ENCODE measurements at regions of chr11 and their contacts with region 1.

Region 1: GRCh38 chr11:65225279-65226102 is 36.3 kb upstream of the POLA2 start:
- DNase-seq: peak; percentile 49
- ATAC-seq: peak; percentile 89
- H3K4me3 Mint-ChIP-seq: peak overlapping the region; percentile 83
- H3K27ac Mint-ChIP-seq: peak overlapping the region; percentile 24
- H3K4me1 Mint-ChIP-seq: peaks cover 17% of the 10 kb centered on the region
- H3K27me3 Mint-ChIP-seq: no peaks in the 10 kb centered on the region
- CTCF ChIP-seq: no peak

Region 2: GRCh38 chr11:64916775-64917662 is 308.5 kb before region 1 on chr11 and contains the start of gene ATG2A:
- CTCF ChIA-PET with region 1: no interaction called
- POLR2A ChIA-PET with region 1: no interaction called
- intact Hi-C with region 1: no loop called
- DNase-seq: peak; percentile 97
- ATAC-seq: peak; percentile 98
- H3K4me3 Mint-ChIP-seq: peak within 1 kb of the TSS; percentile 88
- H3K27ac Mint-ChIP-seq: peak within 1 kb of the TSS; percentile 85
- H3K4me1 Mint-ChIP-seq: peaks cover 38% of the 10 kb centered on the region
- H3K27me3 Mint-ChIP-seq: no peaks in the 10 kb centered on the region
- CTCF ChIP-seq: no peak
- total RNA-seq, gene ATG2A: 31.2 and 35.0 TPM in 2 replicates

Region 3: GRCh38 chr11:65169164-65169641 is 56.3 kb before region 1 on chr11:
- CTCF ChIA-PET with region 1: no interaction called
- POLR2A ChIA-PET with region 1: no interaction called
- intact Hi-C with region 1: no loop called
- DNase-seq: no peak
- ATAC-seq: peak; percentile 62
- H3K4me3 Mint-ChIP-seq: no peak overlapping the region
- H3K27ac Mint-ChIP-seq: peak overlapping the region; percentile 87
- H3K4me1 Mint-ChIP-seq: peaks cover 12% of the 10 kb centered on the region
- H3K27me3 Mint-ChIP-seq: no peaks in the 10 kb centered on the region
- CTCF ChIP-seq: no peak

Region 4: GRCh38 chr11:65236194-65237059 is 10.9 kb after region 1 on chr11:
- CTCF ChIA-PET with region 1: no interaction called
- POLR2A ChIA-PET with region 1: no interaction called
- intact Hi-C with region 1: no loop called
- DNase-seq: no peak
- ATAC-seq: no peak
- H3K4me3 Mint-ChIP-seq: no peak overlapping the region
- H3K27ac Mint-ChIP-seq: no peak overlapping the region
- H3K4me1 Mint-ChIP-seq: no peaks in the 10 kb centered on the region
- H3K27me3 Mint-ChIP-seq: no peaks in the 10 kb centered on the region
- CTCF ChIP-seq: no peak

Region 5: DNA sequence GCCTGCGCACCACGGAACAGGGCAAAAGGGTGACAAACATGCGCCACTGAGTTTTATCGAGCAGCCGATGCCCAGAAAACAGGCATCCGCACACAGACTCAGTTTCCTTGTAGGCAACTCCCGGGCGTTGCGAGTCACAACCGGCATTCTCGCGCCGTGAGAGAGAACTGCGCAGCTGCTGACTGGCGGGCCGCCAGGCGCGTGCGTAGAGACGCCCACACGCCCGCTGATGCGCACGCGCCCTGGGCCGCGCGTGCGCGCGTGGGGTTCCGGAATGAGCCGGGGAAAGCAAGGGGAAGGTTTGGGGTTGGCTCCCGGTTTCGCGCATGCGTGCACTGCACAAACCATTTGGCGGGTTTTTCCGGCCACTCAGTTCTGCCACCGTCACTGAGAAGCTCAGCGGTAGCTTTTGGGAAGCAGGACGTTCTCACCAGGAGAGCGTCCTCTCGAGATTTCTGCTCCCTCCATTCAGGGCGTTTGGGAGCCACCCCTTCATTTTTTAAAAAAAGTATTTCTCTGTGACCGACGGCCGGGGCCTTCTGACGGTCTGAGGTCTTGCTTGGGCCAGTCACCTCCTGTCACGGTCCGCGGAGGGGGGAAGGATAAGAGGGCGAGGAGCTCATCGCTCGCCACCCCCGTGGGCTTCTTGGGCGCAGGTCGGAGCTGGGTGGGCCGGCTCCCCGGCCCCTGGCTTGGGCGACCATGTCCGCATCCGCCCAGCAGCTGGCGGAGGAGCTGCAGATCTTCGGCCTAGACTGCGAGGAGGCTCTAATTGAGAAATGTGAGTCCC is 36.3 kb after region 1 on chr11 and contains the start of gene POLA2:
- CTCF ChIA-PET with region 1: interaction called, 23 read pairs
- POLR2A ChIA-PET with region 1: interaction called, 9 read pairs
- intact Hi-C with region 1: loop called (anchors 1 kb)
- DNase-seq: peak; percentile 98
- ATAC-seq: peak; percentile 83
- H3K4me3 Mint-ChIP-seq: peak within 1 kb of the TSS; percentile 90
- H3K27ac Mint-ChIP-seq: peak within 1 kb of the TSS; percentile 91
- H3K4me1 Mint-ChIP-seq: peaks cover 27% of the 10 kb centered on the region
- H3K27me3 Mint-ChIP-seq: no peaks in the 10 kb centered on the region
- CTCF ChIP-seq: no peak
- total RNA-seq, gene POLA2: 37.1 and 43.4 TPM in 2 replicates

Measured in activated B cell treated with CpG ODN at 0.5 μM for 24 hours (primary cell).